GM23248 (cell line): ENCODE measurements at regions of chr22 and their contacts with region 1.

Region 1: GRCh38 chr22:31080848-31081649 is at the start of gene SMTN:
- DNase-seq: peak; percentile 96
- H3K4me3 ChIP-seq: peak within 1 kb of the TSS; percentile 93
- H3K27ac ChIP-seq: peak within 1 kb of the TSS; percentile 84
- H3K4me1 ChIP-seq: peaks cover 28% of the 10 kb centered on the region
- H3K27me3 ChIP-seq: no peaks in the 10 kb centered on the region
- total RNA-seq, gene SMTN: 160 and 175 TPM in 2 replicates

Region 2: DNA sequence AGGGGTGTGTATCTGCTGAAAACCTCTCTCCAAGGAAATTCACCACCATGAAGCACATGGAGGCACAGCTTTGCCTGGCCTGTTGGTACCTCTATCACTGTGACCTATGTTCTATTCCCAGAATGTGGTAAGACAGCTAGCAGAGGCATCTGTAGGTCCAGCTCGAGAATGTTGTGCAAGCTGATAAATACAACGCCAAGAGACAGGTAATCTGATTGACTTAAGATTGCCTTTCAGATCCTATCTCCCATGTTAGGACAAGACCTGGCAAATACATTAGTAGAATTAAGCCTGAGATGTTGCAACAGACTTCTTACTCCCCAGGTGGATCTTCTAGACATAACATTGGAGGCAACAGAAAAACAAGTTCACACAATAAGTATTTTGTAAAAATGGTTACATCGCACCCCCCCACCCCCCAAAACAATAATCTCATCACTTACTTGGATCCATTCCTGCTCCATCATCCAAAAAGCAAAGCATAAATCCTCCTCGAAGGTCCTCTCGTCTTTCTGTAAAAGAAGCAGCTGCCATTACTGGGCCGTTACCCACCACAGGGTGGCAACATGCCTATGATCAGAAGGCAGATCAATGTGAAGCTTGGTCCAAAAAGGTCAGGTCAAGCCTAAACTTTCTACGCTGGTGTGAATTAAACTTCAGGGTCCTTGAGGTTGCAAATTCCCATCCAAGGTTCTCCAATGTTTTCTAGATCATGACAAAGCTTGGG is 131.0 kb before region 1 on chr22:
- in situ Hi-C with region 1: loop called (anchors 10 kb)
- DNase-seq: no peak
- H3K4me3 ChIP-seq: no peak overlapping the region
- H3K27ac ChIP-seq: no peak overlapping the region
- H3K4me1 ChIP-seq: no peaks in the 10 kb centered on the region
- H3K27me3 ChIP-seq: no peaks in the 10 kb centered on the region